K562 (cell line): ENCODE measurements at regions of chr1 and their contacts with region 1.

Region 1: GRCh38 chr1:31084782-31085569 is 19.5 kb upstream of the PUM1 start:
- DNase-seq: peak; percentile 49 to 86 (median 68)
- ATAC-seq: peak; percentile 87
- H3K4me3 ChIP-seq: no peak overlapping the region
- H3K27ac ChIP-seq: peak overlapping the region; percentile 42; the same call in 2 of the 3 replicates
- H3K4me1 ChIP-seq: peaks cover 16 to 20% of the 10 kb centered on the region in 2 experiments
- H3K27me3 ChIP-seq: no peaks in the 10 kb centered on the region
- CTCF ChIP-seq: peak in 1 of 3 experiments; percentile 10; a peak in 1 of 6 replicates
- EP300 ChIP-seq: peak; percentile 80
- POLR2A ChIP-seq: no peak
- RAD21 ChIP-seq: peak in 1 of 2 experiments; percentile 16; a peak in 2 of 4 replicates

Region 2: DNA sequence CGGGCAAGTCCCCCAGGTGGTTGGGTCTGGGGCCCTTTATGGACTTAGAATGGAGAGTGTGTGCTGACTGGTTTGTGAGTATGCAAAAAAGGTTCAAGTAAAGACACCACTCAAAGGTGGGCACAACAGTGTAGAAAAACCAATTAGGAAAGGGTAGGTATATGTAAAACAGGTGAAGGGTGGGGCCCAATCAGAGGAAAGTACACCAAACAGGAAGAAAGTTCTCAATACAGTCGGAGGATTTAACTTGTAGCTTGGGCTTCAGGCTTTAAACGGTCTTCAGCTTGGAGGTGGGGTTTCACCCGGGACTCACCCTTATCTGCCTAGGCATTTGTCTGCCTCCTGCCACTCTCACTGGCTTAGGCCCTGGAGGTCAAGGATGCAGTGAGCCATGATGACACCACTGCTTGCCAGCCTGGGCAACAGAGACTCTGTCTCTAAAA is 12.7 kb before region 1 on chr1:
- CTCF ChIA-PET with region 1: interaction called, 3 read pairs
- POLR2A ChIA-PET with region 1: interaction called, 35 read pairs
- in situ Hi-C with region 1: no loop called
- intact Hi-C with region 1: no loop called
- DNase-seq: peak in 2 of 4 experiments; percentile 72 to 87
- ATAC-seq: peak; percentile 84
- H3K4me3 ChIP-seq: no peak overlapping the region
- H3K27ac ChIP-seq: peak overlapping the region; percentile 59
- H3K4me1 ChIP-seq: peaks cover 10 to 32% of the 10 kb centered on the region in 2 experiments; a peak in 4 of 5 replicates
- H3K27me3 ChIP-seq: no peaks in the 10 kb centered on the region
- CTCF ChIP-seq: no peak
- EP300 ChIP-seq: peak; percentile 54; the same call in 1 of the 2 replicates
- POLR2A ChIP-seq: peak; percentile 61
- RAD21 ChIP-seq: no peak